ENCODE measurements at regions of chr10 and their contacts with region 1.

Region 1: GRCh38 chr10:70115948-70116682 is 16.5 kb downstream of the AIFM2 start:
- DNase-seq: peak; percentile 72
- ATAC-seq: peak; percentile 78
- H3K4me3 Mint-ChIP-seq: no peak overlapping the region
- H3K27ac Mint-ChIP-seq: peak overlapping the region; percentile 53
- H3K4me1 Mint-ChIP-seq: peaks cover 24% of the 10 kb centered on the region
- H3K27me3 Mint-ChIP-seq: no peaks in the 10 kb centered on the region

Region 2: DNA sequence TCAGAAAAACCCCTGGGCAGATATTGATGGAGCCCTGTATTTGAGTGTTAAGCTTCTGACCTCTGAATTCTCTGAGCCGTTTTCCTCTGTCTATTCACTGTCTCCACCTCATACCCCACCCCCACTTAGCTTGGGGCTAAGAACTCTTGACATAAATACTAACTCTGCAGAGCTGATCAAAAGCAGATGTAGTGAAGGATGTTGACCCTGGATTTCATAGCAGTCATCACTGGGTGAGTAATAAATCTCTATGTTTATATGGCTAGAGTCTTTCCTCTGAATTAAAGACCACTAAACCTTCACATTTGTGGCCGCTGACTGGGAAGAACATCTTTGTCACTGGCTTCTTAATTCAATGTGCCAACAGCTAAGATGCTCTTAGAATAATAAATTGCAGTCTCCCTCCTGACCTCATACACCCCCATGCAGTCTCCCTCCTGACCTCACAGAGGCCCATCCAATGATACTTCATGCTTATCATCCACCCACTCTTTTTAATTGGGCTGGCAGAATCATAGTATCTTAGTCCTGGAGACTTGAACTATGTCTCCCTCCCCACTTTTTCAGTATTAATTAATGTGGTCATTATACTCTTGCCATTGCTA is 141.5 kb before region 1 on chr10:
- CTCF ChIA-PET with region 1: no interaction called
- POLR2A ChIA-PET with region 1: no interaction called
- DNase-seq: no peak
- ATAC-seq: no peak
- H3K4me3 Mint-ChIP-seq: no peak overlapping the region
- H3K27ac Mint-ChIP-seq: no peak overlapping the region
- H3K4me1 Mint-ChIP-seq: peaks cover 12% of the 10 kb centered on the region
- H3K27me3 Mint-ChIP-seq: peaks cover 36% of the 10 kb centered on the region

Region 3: GRCh38 chr10:70084189-70084588 is 31.9 kb before region 1 on chr10:
- CTCF ChIA-PET with region 1: interaction called, 11 read pairs
- POLR2A ChIA-PET with region 1: no interaction called
- DNase-seq: no peak
- ATAC-seq: no peak
- H3K4me3 Mint-ChIP-seq: no peak overlapping the region
- H3K27ac Mint-ChIP-seq: no peak overlapping the region
- H3K4me1 Mint-ChIP-seq: no peaks in the 10 kb centered on the region
- H3K27me3 Mint-ChIP-seq: peaks cover 11% of the 10 kb centered on the region

Region 4: GRCh38 chr10:70093335-70093944 is 22.7 kb before region 1 on chr10:
- CTCF ChIA-PET with region 1: interaction called, 105 read pairs
- POLR2A ChIA-PET with region 1: interaction called, 5 read pairs
- DNase-seq: peak; percentile 63
- ATAC-seq: peak; percentile 80
- H3K4me3 Mint-ChIP-seq: peak overlapping the region; percentile 78
- H3K27ac Mint-ChIP-seq: peak overlapping the region; percentile 86
- H3K4me1 Mint-ChIP-seq: peaks cover 46% of the 10 kb centered on the region
- H3K27me3 Mint-ChIP-seq: no peaks in the 10 kb centered on the region

Region 5: GRCh38 chr10:70130878-70131559 is 14.9 kb after region 1 on chr10:
- CTCF ChIA-PET with region 1: interaction called, 38 read pairs
- POLR2A ChIA-PET with region 1: no interaction called
- DNase-seq: no peak
- ATAC-seq: no peak
- H3K4me3 Mint-ChIP-seq: peak overlapping the region; percentile 85
- H3K27ac Mint-ChIP-seq: no peak overlapping the region
- H3K4me1 Mint-ChIP-seq: peaks cover 35% of the 10 kb centered on the region
- H3K27me3 Mint-ChIP-seq: no peaks in the 10 kb centered on the region

Region 6: DNA sequence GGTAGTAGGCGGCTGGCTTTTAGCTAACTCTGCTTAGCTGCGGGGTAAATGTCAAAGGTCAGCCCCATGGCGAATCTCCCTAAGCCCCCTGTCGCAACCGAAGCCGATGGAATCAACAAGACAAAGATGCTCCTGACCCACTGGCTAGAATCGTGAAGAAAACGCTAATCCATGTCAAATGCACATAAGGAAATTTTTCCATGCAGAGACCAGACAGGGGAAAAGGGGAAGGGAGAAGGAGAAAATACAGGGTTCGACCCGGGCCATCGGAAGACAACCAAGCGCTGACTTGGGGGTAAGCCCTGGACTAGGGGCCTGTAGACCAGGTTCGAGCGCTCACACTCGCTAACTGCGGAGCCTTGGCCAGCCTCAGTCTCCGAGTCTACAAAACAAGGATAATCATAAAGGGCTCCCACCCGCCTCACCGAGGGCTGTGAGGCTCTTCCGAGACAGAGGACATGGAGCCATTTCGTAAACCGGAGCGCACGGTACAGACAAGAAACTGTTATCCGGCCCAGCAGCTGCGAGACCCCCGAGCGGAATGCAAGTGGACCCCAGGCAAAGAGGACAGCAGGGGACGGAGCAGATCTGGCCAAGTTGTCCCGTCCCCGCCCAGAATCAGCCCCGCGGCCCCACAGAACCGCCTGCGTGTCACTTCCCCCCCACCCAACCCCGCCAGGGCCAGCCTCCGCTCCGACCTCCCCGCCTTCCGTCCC is 53.7 kb after region 1 on chr10:
- CTCF ChIA-PET with region 1: interaction called, 20 read pairs
- POLR2A ChIA-PET with region 1: no interaction called
- DNase-seq: peak; percentile 38
- ATAC-seq: peak; percentile 11
- H3K4me3 Mint-ChIP-seq: peak overlapping the region; percentile 86
- H3K27ac Mint-ChIP-seq: peak overlapping the region; percentile 99
- H3K4me1 Mint-ChIP-seq: peaks cover 65% of the 10 kb centered on the region
- H3K27me3 Mint-ChIP-seq: no peaks in the 10 kb centered on the region

Region 7: DNA sequence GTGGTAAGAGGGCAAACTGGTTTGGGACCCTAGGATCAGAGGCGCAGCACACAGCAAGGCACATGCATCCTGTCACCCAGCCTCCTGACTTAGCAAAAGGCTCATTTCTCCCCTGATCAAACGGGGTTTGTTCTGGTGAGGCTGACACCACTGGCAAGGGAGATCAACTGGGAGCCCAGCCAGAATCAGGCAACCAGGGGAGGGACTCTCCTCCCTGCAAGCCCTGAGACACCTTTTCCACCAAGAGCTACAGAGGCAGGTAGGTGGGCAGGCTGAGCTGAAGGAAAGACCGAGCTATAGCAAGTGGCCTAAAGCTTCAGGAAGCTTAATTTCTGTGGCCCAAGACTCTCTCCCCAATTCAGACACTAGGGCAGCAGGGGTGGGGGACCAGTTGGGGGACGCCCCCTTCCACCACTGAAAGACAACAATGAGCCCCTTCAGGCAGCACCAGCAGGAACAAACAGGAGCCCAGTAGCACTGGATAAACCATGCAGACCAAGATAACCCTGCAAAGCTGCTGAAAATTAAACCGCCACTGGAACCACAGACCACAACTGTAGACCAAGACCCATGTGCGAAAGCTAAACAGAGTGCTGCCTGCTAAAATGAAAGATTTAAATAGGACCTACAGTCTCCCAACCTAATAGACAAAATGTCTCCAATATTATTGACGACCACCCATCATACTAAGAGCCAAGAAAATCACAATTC is 81.3 kb after region 1 on chr10:
- CTCF ChIA-PET with region 1: interaction called, 15 read pairs
- POLR2A ChIA-PET with region 1: no interaction called
- DNase-seq: peak; percentile 71
- ATAC-seq: peak; percentile 79
- H3K4me3 Mint-ChIP-seq: peak overlapping the region; percentile 25
- H3K27ac Mint-ChIP-seq: peak overlapping the region; percentile 79
- H3K4me1 Mint-ChIP-seq: peaks cover 47% of the 10 kb centered on the region
- H3K27me3 Mint-ChIP-seq: no peaks in the 10 kb centered on the region